Endothelial cell of umbilical vein (primary cell): ENCODE measurements at regions of chr11 and their contacts with region 1.

Region 1: GRCh38 chr11:43708776-43709175 is 28.2 kb downstream of the HSD17B12 start:
- DNase-seq: peak; percentile 24
- H3K4me3 ChIP-seq: no peak overlapping the region
- H3K27ac ChIP-seq: no peak overlapping the region
- H3K4me1 ChIP-seq: no peaks in the 10 kb centered on the region
- H3K27me3 ChIP-seq: no peaks in the 10 kb centered on the region
- CTCF ChIP-seq: peak in 1 of 2 donors; percentile 28
- POLR2A ChIP-seq: no peak

Region 2: GRCh38 chr11:43573233-43573632 is 135.5 kb before region 1 on chr11:
- CTCF ChIA-PET with region 1: interaction called, 10 read pairs
- POLR2A ChIA-PET with region 1: no interaction called
- dilution Hi-C with region 1: no loop called
- intact Hi-C with region 1: no loop called
- DNase-seq: no peak
- H3K4me3 ChIP-seq: no peak overlapping the region
- H3K27ac ChIP-seq: no peak overlapping the region
- H3K4me1 ChIP-seq: no peaks in the 10 kb centered on the region
- H3K27me3 ChIP-seq: peaks cover 71 to 72% of the 10 kb centered on the region in 2 experiments
- CTCF ChIP-seq: peak; percentile 57 to 59
- POLR2A ChIP-seq: no peak